KBM-7 (cell line): ENCODE measurements at regions of chr5 and their contacts with region 1.

Region 1: DNA sequence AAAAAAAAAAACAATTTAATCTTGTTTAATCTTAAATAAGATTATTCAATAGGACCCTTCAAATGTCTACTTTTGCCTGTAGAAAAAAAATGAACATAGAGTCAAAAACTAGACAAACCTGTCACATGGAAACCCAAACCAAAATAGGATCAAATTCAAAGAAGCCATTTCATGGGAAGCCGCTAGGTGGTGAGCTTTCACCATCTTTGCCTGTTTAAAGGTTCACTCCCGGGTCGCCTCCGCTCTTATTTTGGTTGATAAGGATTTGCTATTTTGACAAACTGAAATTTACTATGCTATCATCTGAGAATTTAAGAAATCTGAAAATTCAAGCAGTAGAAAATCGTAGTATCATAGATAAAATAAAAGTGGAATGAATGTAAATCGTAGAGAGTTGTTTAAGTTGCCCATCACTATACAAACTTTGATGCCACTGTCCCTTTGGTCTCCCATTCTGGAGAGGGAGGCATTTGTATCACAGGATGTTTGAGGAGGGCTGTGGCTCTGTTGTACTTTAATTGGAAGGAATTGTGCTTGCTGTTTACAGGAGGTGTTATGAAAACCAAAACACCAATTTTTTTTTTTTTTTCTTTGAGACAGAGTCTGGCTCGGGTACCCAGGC is 43.5 kb upstream of the DNAH5 start:
- DNase-seq: peak; percentile 73

Region 2: GRCh38 chr5:14264604-14265316 is 276.8 kb after region 1 on chr5:
- in situ Hi-C with region 1: loop called (anchors 25 kb)
- DNase-seq: peak; percentile 93

Region 3: DNA sequence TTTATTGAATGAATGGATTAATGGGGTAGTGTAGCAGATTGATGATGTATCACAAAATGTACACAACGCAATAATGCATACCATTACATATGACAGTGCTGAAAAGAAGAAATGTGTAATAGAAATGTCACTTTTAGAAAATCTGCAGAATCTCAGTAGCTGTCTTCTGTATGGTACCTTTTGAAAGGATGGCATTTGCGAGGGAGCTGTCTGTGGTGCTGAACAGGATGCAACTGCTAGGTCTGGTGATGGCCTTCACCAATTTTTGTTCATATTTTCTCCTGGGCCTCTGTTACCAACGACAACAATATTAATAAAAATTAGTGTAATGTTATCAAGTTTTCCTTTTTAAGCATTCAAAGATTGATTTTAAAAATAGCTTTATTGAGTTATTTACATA is 640.4 kb after region 1 on chr5:
- in situ Hi-C with region 1: loop called (anchors 25 kb)
- DNase-seq: peak; percentile 53